GM13976 (cell line): ENCODE measurements at regions of chr1 and their contacts with region 1.

Region 1: GRCh38 chr1:214331827-214332423 is 51.0 kb downstream of the SMYD2 start:
- DNase-seq: peak; percentile 80
- CTCF ChIP-seq: peak; percentile 81

Region 2: DNA sequence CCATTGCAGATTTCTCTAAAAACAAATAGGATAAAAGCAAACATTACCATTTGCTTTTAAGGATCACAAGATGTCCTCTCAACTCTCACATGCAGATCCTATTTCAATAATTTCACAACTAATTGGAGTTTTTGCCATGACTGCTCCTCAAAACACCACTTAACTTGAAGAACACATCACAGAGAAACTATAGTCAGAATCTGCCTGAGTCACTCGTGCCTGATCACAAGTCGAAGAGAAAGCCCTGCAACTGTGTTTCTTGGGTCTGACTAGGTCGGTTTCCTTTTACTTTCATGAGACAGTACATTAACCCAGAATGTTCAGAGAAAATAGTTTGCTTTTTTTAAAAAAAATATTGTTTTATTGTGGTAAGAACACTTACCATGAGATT is 97.3 kb before region 1 on chr1:
- in situ Hi-C with region 1: no loop called
- DNase-seq: no peak
- CTCF ChIP-seq: no peak

Region 3: DNA sequence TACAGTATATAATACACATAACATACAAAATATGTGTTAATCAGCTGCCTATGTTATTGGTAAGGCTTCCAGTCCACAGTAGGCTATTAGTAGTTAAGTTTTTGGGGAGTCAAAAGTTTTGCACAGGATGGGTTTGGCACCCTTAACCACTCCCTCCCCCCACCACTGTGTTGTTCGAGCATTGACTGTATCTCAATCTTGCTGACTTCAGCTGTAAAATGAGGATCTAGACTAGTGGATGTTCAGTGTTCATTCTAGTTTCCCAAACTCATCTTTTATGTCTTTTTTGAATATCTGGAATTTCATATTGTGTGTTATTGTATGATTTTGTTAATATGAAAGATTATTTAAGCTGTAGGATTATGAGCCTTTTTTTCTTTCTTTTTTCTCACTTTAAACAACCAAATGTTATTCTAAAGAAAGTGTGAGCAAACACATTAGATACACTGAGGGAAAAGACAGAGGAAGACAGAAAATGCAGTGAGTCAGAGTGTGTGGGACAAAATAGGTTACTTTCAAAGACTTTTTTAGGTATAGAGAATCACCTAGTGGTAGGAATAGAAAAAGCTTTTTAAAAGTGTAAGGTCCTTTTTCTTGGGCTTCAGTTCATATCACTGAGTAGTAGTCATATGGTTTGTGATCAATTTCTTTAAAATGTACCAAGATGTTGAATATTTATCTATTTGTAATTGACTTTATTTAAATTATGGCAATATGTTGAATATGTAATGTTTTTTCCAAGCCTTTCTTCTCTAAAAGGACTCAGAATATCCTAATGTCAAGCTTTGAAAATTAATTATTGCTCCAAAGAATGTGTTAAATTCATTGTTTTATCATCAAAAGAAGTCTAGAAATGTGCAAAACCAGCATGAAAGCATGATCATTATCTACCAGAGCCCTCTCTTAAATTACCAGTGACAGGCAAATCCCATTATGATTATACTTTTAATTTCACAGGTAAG is 253.2 kb after region 1 on chr1:
- in situ Hi-C with region 1: loop called (anchors 10 kb)
- DNase-seq: no peak
- CTCF ChIP-seq: peak; percentile 17